Posterior vena cava (tissue), 2 donors: ENCODE measurements at regions of chr2 and their contacts with region 1.

Region 1: DNA sequence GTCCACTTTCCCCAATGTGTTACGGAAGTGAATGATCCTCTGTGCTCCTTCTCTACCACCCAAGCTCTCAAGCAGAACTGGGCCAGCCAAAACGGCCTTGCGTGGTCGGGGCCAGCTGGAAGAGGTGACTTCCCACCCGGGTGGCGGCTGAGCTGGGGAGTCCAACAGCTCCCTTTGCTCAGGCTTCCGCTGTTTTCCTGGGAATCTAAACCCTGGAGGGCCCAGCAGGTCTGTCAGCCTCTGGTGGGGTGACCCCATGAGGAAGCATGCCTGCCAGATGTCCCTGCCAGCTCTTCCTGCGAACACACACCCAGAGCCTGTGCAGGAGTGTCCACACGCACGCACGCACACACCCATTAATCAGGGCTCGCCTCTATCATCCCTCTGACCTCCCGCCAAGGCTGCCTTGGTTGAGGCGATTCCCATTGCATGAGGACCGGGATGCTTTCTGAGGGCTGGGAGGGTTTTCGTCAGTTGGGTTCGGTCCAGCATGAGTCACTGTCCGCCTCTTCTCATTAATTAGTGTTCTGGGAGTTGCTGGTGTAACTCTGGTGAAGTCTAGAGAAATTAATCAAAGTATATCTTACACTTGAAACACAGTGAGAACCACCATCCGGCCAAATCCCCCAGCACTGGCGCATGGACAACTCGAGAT is 90.6 kb downstream of the TWIST2 start:
- DNase-seq: peak; percentile 97

Region 2: GRCh38 chr2:238790126-238790832 is 148.2 kb before region 1 on chr2:
- intact Hi-C with region 1: no loop called
- DNase-seq: peak; percentile 10

Region 3: DNA sequence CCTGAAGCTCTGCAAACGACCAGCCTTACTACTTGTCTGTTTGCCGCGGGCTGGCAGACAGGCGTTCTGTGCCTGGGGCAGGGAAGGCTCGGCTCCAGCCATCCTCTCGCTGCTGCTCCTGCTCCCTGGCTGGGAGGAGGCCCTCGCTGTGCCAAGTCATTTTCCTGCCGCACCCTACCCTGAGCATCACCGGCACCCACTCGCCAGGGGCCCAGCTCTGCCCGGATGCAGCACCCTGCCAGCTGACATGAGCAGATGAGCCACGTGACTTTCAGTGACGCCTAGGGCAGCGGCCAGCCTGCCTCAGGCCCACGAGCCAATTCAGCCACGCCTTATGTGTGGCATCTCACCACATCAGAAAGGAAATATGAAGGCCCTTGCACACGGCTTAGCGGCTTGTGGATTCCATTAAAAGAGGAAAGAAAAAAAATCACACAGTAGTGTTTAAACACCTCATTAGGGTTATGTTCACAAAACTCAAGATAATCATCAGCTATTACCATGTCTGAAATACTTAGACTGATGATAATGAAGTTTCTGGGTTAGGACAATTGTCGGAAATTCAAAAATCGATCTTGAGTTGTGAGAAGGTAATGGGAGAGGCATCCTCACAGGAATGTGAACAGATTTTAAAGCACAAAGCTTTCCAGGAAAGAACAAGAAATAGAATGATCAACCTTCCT is 159.9 kb after region 1 on chr2:
- intact Hi-C with region 1: no loop called
- DNase-seq: no peak

Region 4: DNA sequence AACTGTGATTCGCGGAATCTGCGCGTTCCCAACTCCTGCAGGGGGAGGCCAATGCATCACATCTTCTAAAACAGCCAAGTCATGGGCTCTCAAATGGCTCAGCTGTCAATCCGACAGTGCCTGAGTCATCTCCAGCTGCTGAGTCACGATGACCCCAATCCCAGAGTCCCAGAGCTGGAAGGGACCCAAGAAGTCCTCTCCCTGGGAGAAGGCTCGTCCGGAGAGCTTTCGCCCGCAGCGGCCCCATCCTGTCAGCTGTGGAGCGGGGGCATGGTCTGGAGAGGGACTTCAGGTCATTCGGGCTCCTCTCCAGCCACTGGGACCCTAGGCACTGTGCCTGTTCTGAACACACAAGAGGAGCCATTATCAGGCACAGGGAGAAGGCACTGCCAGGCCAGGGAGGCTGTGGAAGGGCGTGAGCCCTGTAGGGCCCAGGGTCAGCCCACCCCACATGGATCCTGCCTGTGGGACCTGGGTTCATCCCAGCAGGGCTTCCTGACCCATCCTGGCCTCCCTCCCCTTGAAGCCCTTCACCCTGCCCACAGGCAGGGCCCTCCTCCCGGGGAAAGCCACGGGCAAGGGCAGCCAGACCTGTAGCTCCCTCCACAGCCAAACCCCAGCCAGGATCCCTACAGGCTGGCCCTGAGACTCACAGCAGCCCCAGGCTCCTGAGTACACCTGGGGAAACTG is 1449.3 kb after region 1 on chr2:
- intact Hi-C with region 1: loop called in 1 of 2 experiments (anchors 5 kb)
- DNase-seq: peak; percentile 90